Ovary (tissue), 10 donors: ENCODE measurements at regions of chr3 and their contacts with region 1.

Region 1: DNA sequence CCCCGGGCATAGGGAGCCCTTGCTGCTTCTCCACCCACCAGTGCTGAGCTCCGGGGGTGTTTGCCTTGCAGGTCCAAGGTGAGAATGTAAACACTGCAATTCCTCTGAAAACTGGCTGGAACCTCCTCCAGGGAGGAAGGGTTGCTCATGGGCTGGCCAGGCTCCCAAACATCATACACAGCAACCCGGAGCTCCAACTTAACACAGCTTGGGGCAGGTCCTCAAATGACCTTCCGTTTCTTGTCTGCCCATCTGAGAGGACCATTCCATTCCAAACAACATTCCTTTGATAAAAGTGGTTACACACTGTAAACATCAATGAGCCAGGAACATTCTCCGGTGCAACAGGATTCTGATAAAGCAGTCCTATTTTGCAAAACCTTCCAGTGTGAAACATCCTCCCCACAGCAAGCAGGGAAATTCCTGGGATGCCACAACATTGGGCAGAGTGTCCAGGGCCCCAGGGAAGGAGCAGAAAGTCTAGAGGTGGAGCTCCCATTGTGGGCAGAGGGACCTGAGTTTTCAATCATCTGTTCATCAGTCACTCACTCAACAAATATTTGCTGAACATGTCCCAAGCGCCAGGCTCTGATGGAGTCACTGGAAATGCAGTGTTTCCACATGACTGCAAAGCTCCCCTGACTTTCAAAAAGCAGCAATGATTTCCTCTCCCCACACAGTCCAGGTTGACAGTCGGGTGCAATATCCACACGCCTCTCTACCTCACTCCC is 7.3 kb upstream of the HEG1 start:
- DNase-seq: peak in 1 of 5 donors; percentile 46
- H3K4me3 ChIP-seq: no peak overlapping the region
- H3K27ac ChIP-seq: no peak overlapping the region
- H3K4me1 ChIP-seq: peaks cover 11% of the 10 kb centered on the region
- H3K27me3 ChIP-seq: no peaks in the 10 kb centered on the region
- CTCF ChIP-seq: no peak
- EP300 ChIP-seq: no peak
- POLR2A ChIP-seq: no peak

Region 2: GRCh38 chr3:125119752-125120378 is 56.8 kb after region 1 on chr3:
- intact Hi-C with region 1: loop called in 1 of 4 experiments (anchors 10 kb)
- DNase-seq: no peak
- H3K4me3 ChIP-seq: no peak overlapping the region
- H3K27ac ChIP-seq: no peak overlapping the region
- H3K4me1 ChIP-seq: peaks cover 27% of the 10 kb centered on the region
- H3K27me3 ChIP-seq: no peaks in the 10 kb centered on the region
- CTCF ChIP-seq: no peak
- EP300 ChIP-seq: no peak
- POLR2A ChIP-seq: no peak